ENCODE measurements at regions of chr12 and their contacts with region 1.

Region 1: DNA sequence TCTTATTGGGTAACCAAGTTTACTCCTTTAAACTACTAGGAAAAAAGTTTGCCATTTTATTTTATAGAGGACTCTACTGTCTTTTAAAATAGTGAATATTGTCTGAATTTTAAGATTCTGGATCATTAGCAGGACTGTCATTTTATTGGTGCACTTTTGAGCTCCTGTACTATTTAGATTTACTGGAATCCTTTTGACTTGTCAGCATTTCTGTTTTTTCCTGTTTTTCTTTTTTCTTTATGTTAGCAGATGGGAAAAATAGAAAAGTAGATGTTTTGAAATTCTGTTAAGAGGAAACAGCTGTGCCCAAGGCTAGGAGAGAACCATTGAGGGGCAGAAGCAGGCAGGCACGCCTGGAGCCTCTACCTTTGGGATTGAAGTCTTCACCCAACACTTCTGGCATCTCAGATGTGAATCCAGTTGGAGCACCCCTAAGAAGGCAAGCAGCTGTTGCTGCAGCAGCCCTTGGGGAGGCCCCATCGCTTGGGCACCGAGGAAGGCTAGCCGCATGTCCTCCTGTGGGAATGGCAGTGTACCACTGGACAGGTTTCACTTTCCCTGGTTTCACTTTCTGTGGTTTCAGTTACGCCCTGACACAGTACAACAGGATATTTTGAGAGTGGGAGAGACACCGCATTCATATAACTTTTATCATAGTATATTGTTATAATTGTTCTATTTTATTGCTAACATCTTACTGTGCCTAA is 11.5 kb downstream of the RIMKLB start:
- DNase-seq: no peak
- H3K4me3 ChIP-seq: no peak overlapping the region
- H3K27ac ChIP-seq: no peak overlapping the region
- H3K4me1 ChIP-seq: peaks cover 0 to 12% (median 5%) of the 10 kb centered on the region in 4 experiments; a peak in 3 of 7 replicates
- H3K27me3 ChIP-seq: no peaks in the 10 kb centered on the region
- CTCF ChIP-seq: no peak
- EP300 ChIP-seq: no peak
- POLR2A ChIP-seq: no peak
- RAD21 ChIP-seq: no peak

Region 2: DNA sequence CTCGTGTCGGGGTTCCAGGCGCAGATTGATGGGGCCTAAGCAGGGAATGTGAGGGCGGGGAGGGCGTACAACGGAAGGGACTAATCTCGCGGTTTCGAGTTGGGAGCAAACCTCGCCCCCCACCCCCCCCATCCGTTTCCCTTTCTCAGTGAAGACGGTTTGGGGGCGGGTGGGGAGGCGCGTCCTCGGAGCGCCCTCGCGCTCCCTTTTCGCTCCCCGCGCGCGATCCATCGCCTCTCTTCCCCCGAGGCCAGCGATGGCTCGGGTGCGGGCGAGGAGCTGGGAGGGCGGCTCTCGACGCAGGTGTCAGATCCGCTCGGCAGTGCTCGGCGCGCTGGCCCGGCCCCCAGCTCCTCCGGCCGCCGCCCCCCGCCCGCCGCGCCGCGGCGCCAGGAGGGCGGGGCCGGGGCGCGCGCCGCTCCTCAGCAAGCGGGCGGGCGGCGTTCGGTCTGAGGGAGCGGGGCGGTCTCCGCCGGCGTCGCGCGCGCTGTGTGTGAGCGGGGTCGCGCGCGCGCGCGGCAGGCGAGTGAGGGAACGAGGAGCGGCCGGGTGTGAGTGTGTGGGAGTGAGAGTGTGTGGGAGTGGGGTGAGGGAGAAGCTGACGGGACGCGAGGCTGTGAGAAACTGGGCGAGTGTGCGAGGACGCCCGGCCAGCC is 11.7 kb before region 1 on chr12 and contains the start of gene RIMKLB:
- CTCF ChIA-PET with region 1: interaction called, 3 read pairs
- POLR2A ChIA-PET with region 1: interaction called, 15 read pairs
- DNase-seq: peak in 1 of 2 experiments; percentile 82
- H3K4me3 ChIP-seq: peak within 1 kb of the TSS; percentile 72 to 92 (median 80)
- H3K27ac ChIP-seq: peak within 1 kb of the TSS; percentile 92
- H3K4me1 ChIP-seq: peaks cover 2 to 9% (median 5%) of the 10 kb centered on the region in 4 experiments; a peak in 4 of 7 replicates
- H3K27me3 ChIP-seq: no peaks in the 10 kb centered on the region
- CTCF ChIP-seq: no peak
- EP300 ChIP-seq: no peak
- POLR2A ChIP-seq: peak in 1 of 2 experiments; percentile 19; a peak in 2 of 3 replicates
- RAD21 ChIP-seq: no peak
- total RNA-seq, gene RIMKLB: 75.7 and 78.2 TPM in 2 replicates

Region 3: DNA sequence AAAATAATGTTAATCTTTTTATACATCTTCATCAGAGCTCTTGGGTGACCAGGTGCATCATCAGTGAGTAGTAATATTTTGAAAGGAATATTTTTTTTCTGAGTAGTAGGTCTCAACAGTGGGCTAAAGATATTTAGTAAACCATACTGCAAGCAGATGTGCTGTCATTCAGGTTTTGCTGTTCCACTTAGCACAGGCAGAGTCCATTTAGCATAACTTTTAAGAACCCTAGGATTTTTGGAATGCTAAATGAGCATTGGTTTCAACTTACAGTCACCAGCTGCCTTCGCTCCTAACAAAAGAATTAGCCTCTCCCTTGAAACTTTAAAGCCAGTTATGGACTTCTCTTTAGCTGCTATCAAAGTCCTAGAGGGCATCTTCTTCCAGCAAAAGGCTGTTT is 13.0 kb after region 1 on chr12:
- CTCF ChIA-PET with region 1: interaction called, 3 read pairs
- POLR2A ChIA-PET with region 1: interaction called, 17 read pairs
- DNase-seq: no peak
- H3K4me3 ChIP-seq: peak overlapping the region in 1 of 4 experiments; percentile 5; a peak in 1 of 8 replicates
- H3K27ac ChIP-seq: no peak overlapping the region
- H3K4me1 ChIP-seq: peaks cover 2 to 18% (median 15%) of the 10 kb centered on the region in 4 experiments
- H3K27me3 ChIP-seq: no peaks in the 10 kb centered on the region
- CTCF ChIP-seq: no peak
- EP300 ChIP-seq: no peak
- POLR2A ChIP-seq: no peak
- RAD21 ChIP-seq: no peak

Region 4: GRCh38 chr12:9027161-9028059 is 318.1 kb after region 1 on chr12:
- CTCF ChIA-PET with region 1: no interaction called
- POLR2A ChIA-PET with region 1: no interaction called
- DNase-seq: no peak
- H3K4me3 ChIP-seq: no peak overlapping the region
- H3K27ac ChIP-seq: no peak overlapping the region
- H3K4me1 ChIP-seq: no peaks in the 10 kb centered on the region
- H3K27me3 ChIP-seq: no peaks in the 10 kb centered on the region
- CTCF ChIP-seq: no peak
- EP300 ChIP-seq: no peak
- POLR2A ChIP-seq: no peak
- RAD21 ChIP-seq: no peak